OCI-LY7 (cell line): ENCODE measurements at regions of chr1 and their contacts with region 1.

Region 1: DNA sequence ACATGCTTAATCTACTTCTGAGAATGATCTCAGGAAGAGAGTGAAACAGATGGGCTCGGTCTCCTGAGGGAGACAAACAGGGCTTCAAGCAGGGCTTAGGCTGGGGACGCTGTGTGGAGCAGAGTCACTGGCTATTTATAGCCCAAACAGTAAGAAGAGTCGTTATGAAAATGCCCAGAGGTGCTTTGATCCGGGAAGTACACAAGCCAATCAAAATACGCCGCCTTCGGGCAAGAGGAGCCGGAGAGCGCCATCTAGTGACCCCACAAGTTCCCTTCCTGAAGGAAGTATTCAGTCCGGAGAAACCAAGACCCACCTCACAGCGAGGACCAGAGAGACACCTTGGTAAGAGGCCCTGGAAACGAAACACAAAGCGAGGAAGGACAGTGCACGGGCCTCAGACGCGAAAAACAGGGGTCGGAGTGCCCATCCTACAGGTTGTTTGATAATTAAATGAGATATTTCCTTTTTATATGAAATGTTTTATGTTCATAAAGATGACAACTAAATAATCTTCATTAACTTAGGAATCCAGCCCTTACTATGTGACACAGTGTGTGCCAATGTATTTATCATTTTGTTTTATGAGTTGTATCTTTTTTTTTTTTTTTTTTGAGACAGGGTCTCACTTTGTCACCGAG is 25.0 kb upstream of the SCCPDH start:
- DNase-seq: peak; percentile 87
- H3K4me3 ChIP-seq: no peak overlapping the region
- H3K27ac ChIP-seq: peak overlapping the region; percentile 23
- H3K4me1 ChIP-seq: peaks cover 9% of the 10 kb centered on the region
- CTCF ChIP-seq: peak; percentile 83

Region 2: GRCh38 chr1:246497331-246497915 is 201.8 kb before region 1 on chr1:
- CTCF ChIA-PET with region 1: no interaction called
- POLR2A ChIA-PET with region 1: no interaction called
- intact Hi-C with region 1: loop called (anchors 1 kb)
- DNase-seq: peak; percentile 83
- H3K4me3 ChIP-seq: no peak overlapping the region
- H3K27ac ChIP-seq: no peak overlapping the region
- H3K4me1 ChIP-seq: peaks cover 4% of the 10 kb centered on the region
- CTCF ChIP-seq: peak; percentile 95

Region 3: DNA sequence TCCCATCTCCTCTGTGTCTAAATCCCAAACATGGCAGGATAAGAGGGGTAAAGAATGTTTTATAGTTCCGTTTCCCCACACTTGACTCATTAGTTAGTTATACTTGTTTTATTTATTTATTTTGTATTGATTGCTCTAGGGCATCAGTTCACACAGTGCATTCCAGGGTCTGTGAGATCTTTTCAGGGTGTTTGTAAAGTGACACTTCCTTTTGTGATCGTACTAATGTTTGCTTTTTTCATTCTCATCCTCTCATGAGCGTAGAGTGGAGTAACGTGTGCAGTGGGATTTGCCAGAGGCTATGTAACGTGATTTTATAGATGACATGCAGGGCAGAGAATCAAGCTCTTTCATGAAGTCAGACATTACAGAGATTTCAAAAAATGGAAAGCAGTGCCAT is 128.2 kb after region 1 on chr1:
- CTCF ChIA-PET with region 1: no interaction called
- POLR2A ChIA-PET with region 1: no interaction called
- intact Hi-C with region 1: loop called (anchors 10 kb)
- DNase-seq: no peak
- H3K4me3 ChIP-seq: no peak overlapping the region
- H3K27ac ChIP-seq: no peak overlapping the region
- H3K4me1 ChIP-seq: no peaks in the 10 kb centered on the region
- CTCF ChIP-seq: no peak